Panc1 (cell line): ENCODE measurements at regions of chr12 and their contacts with region 1.

Region 1: GRCh38 chr12:15532364-15532977 is 210.2 kb downstream of the PTPRO start:
- DNase-seq: no peak
- ATAC-seq: no peak
- H3K4me3 ChIP-seq: no peak overlapping the region
- H3K27ac ChIP-seq: no peak overlapping the region
- H3K4me1 ChIP-seq: no peaks in the 10 kb centered on the region
- H3K27me3 ChIP-seq: no peaks in the 10 kb centered on the region
- CTCF ChIP-seq: peak; percentile 48

Region 2: GRCh38 chr12:15320643-15321280 is 211.7 kb before region 1 on chr12:
- CTCF ChIA-PET with region 1: no interaction called
- POLR2A ChIA-PET with region 1: no interaction called
- in situ Hi-C with region 1: no loop called
- intact Hi-C with region 1: no loop called
- DNase-seq: no peak
- ATAC-seq: no peak
- H3K4me3 ChIP-seq: no peak overlapping the region
- H3K27ac ChIP-seq: no peak overlapping the region
- H3K4me1 ChIP-seq: no peaks in the 10 kb centered on the region
- H3K27me3 ChIP-seq: peaks cover 15% of the 10 kb centered on the region
- CTCF ChIP-seq: no peak

Region 3: GRCh38 chr12:15477761-15478160 is 54.7 kb before region 1 on chr12:
- CTCF ChIA-PET with region 1: no interaction called
- POLR2A ChIA-PET with region 1: no interaction called
- in situ Hi-C with region 1: no loop called
- intact Hi-C with region 1: no loop called
- DNase-seq: no peak
- ATAC-seq: no peak
- H3K4me3 ChIP-seq: no peak overlapping the region
- H3K27ac ChIP-seq: no peak overlapping the region
- H3K4me1 ChIP-seq: no peaks in the 10 kb centered on the region
- H3K27me3 ChIP-seq: no peaks in the 10 kb centered on the region
- CTCF ChIP-seq: no peak

Region 4: GRCh38 chr12:15488481-15488880 is 44.0 kb before region 1 on chr12:
- CTCF ChIA-PET with region 1: no interaction called
- POLR2A ChIA-PET with region 1: no interaction called
- in situ Hi-C with region 1: no loop called
- intact Hi-C with region 1: no loop called
- DNase-seq: no peak
- ATAC-seq: no peak
- H3K4me3 ChIP-seq: no peak overlapping the region
- H3K27ac ChIP-seq: no peak overlapping the region
- H3K4me1 ChIP-seq: no peaks in the 10 kb centered on the region
- H3K27me3 ChIP-seq: no peaks in the 10 kb centered on the region
- CTCF ChIP-seq: no peak

Region 5: GRCh38 chr12:15590180-15590826 is 57.8 kb after region 1 on chr12:
- CTCF ChIA-PET with region 1: no interaction called
- POLR2A ChIA-PET with region 1: no interaction called
- in situ Hi-C with region 1: no loop called
- intact Hi-C with region 1: loop called (anchors 2 kb)
- DNase-seq: peak; percentile 53
- ATAC-seq: peak; percentile 95
- H3K4me3 ChIP-seq: peak overlapping the region; percentile 26 to 58
- H3K27ac ChIP-seq: peak overlapping the region; percentile 18; the same call in 1 of the 2 replicates
- H3K4me1 ChIP-seq: no peaks in the 10 kb centered on the region
- H3K27me3 ChIP-seq: no peaks in the 10 kb centered on the region
- CTCF ChIP-seq: peak; percentile 87